Dorsolateral prefrontal cortex (tissue), 120 donors: ENCODE measurements at regions of chr12 and their contacts with region 1.

Region 1: DNA sequence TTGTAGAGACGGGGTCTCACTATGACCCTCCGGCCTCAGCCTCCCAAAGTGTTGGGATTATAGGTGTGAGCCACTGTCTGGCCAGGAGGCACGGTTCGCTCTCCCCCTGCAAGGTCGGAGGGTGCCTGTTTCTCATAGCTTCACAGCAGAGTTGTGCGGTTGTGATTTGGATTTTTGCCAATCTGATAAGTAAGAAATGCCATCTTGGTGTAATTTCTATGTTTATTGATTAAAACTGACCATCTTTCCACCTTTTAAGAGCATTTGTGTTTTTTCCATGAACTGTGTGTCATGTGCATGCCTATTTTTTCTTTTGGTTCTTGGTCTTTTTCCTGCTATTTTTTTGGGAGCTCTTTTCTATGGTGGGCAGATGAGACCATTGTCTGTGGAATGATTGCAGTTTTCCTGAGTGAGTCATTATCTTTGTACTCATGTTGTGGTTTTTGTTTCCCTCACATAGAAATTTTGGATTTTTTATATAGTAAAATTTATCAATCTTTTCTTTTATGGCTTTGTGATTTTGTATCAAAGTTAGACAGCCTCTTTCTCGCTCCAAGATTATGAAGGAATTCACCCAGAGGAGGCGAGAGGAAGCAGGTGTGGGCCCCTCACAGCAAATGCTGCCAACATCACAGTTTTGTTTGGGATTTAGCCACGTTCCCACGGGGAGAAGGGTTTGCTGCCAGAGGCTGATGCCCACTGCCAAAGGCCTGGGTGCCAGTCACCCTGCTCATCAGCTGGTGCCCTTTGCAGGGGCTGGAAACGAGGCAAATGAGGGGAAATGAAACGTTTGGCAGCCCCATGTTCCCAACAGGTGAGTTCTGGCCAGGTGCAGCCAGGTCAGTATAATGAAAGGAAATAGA is 47.2 kb downstream of the RFX4 start:
- DNase-seq: no peak
- H3K4me3 ChIP-seq: no peak overlapping the region
- H3K27ac ChIP-seq: no peak overlapping the region
- H3K27me3 ChIP-seq: peaks cover 0 to 3% (median 0%) of the 10 kb centered on the region in 45 donors
- CTCF ChIP-seq: no peak

Region 2: DNA sequence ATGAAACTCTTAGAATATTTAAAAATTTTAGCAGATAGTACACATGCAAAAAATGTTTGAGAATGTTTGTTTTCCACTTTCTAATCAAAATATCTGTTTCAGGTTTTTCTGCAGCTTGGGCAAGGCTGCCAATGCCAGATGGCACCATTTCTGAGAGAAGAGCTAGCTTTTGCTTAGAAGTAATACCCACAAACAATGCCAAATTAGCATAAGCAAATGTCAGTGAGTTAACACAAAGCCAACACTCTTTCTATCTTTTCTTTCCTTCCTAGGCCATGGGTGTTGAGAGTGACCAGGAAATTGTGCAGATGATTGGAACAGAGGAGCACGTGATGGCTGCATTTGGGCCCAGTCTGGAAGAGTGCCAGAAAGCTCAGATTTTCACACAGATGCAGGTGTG is 237.3 kb before region 1 on chr12:
- intact Hi-C with region 1: loop called in 1 of 2 experiments (anchors 10 kb)
- DNase-seq: peak in 1 of 10 donors; percentile 10
- H3K4me3 ChIP-seq: no peak overlapping the region
- H3K27ac ChIP-seq: no peak overlapping the region
- H3K27me3 ChIP-seq: no peaks in the 10 kb centered on the region
- CTCF ChIP-seq: no peak

Region 3: GRCh38 chr12:106841510-106842302 is 211.7 kb after region 1 on chr12:
- intact Hi-C with region 1: loop called in 1 of 2 experiments (anchors 5 kb)
- DNase-seq: peak in 4 of 10 donors; percentile 15 to 49 (median 26)
- H3K4me3 ChIP-seq: peak overlapping the region in 1 of 59 donors; percentile 19
- H3K27ac ChIP-seq: peak overlapping the region in 4 of 59 donors; percentile 3 to 19 (median 10)
- H3K27me3 ChIP-seq: no peaks in the 10 kb centered on the region
- CTCF ChIP-seq: peak; percentile 31 to 87 (median 74)